ENCODE measurements at regions of chr4 and their contacts with region 1.

Region 1: DNA sequence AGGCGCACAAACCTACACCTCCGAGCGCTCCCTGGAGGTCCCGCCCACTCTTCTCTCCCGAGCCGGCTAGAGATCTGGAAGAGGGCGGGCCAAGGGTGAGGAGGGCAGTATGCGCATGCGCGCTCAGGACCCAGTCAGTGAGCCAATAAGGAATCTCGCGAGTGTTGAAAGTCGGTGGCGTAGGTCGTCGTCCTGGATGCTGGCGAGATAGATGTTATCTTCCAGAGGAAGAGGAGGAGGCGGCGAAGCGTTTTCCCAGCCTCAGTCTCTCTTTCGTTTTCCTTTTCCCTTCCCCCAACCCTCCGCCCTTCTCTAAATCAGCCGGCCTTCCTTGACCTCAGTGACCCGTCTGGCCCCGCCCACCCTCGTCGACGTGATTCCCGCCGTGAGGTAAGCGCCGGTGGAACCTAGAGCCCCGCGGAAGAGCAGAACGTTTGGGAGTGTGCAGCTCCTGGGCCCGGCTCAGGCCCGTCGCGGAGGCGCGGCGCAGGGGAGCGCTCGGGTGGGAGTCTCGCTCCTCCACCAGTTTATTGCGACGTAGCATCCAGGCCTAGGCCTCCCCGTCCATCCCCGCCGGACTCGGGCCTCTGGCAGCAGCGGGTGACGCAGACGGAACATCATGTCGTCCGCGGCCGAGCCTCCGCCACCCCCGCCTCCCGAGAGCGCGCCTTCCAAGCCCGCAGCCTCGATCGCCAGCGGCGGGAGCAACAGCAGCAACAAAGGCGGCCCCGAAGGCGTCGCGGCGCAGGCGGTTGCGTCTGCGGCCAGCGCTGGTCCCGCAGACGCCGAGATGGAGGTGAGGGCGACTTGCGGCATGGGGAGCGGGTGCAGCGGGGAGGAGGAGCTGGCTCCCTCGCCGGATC is at the start of gene SMARCA5:
- DNase-seq: peak; percentile 98
- H3K4me3 Mint-ChIP-seq: peak within 1 kb of the TSS; percentile 100
- H3K27ac Mint-ChIP-seq: peak within 1 kb of the TSS; percentile 97
- H3K4me1 Mint-ChIP-seq: peaks cover 25% of the 10 kb centered on the region
- H3K27me3 Mint-ChIP-seq: peaks cover 14% of the 10 kb centered on the region
- total RNA-seq, gene SMARCA5: 59.0 and 60.6 TPM in 2 replicates

Region 2: DNA sequence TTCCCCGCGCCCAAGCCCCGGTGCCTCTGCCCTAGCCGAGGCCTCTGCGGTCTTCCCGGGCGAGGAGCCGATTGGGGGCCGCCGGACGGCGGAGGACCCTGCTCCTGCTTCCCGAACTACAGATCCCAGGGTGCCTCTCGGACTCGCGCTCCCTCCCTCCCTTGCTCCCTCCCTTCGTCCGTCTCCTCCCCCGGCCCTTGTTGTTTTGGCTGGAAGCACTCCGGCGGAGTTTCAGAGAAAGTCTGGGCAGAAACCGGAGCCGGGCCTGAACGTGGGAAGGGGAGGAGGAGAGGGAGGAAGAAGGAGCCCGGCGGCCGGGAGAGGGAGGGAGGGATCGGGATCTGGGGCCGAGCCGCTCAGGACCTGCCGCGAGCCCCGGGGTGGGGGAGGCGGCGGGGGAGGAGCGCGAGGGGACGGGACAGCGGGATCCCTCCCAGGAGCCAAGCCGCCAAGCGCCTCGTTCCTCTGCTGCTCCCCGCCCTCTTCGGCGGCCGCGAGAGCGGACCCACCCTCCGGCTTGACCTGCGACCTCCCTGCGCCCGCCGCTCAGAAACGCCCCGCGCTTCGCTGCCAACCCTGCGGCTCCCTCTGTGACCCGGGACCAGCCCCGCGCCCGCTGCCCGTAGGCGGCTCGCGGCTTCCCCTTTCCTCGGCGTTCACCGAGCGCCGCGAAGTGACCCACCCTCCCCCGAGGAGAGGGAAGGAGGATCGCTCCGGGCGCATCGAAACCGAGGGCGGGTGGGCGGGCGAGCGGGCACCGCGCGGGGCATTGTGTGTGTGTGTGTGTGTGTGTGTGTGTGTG is 177.4 kb before region 1 on chr4:
- intact Hi-C with region 1: loop called (anchors 2 kb)
- DNase-seq: peak; percentile 76
- H3K4me3 Mint-ChIP-seq: peak overlapping the region; percentile 86
- H3K27ac Mint-ChIP-seq: no peak overlapping the region
- H3K4me1 Mint-ChIP-seq: peaks cover 6% of the 10 kb centered on the region
- H3K27me3 Mint-ChIP-seq: peaks cover 53% of the 10 kb centered on the region

Region 3: DNA sequence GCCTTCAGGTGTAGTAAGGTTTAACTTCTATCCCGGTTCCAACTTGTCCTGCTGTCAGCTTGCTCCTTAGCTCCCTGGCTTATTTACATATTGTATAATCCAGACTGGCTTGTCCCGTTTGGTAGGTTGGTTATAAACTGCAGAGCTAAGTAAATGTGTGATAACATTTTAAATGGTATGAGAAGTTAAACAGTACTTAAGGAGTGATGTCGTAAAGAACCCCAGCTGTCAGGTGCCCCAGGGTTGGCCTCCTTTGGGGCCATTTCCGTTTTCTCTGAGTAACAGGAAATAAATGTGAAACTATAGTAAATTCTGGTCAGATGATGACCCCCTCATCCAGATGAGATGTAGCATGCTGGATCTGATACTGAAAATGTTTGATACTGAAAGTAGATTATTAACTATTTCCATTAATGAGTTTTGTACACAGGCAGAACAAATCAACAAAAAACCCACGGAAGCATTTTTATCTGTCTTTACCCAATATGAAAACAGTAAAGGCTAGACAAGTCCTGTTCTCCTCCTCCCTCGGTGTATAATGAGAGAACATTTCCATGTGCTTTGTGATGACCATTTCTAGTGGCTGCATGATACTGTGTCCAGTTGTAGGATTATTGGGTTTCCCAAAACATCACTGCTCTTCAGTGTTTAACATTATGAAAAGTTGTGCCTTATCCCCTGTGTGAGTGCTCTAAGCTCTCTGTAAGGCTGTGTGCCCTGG is 154.5 kb before region 1 on chr4:
- intact Hi-C with region 1: loop called (anchors 1 kb)
- DNase-seq: peak; percentile 74
- H3K4me3 Mint-ChIP-seq: peak overlapping the region; percentile 67
- H3K27ac Mint-ChIP-seq: peak overlapping the region; percentile 91
- H3K4me1 Mint-ChIP-seq: peaks cover 20% of the 10 kb centered on the region
- H3K27me3 Mint-ChIP-seq: peaks cover 9% of the 10 kb centered on the region

Region 4: GRCh38 chr4:143558823-143559756 is 45.6 kb after region 1 on chr4:
- intact Hi-C with region 1: loop called (anchors 2 kb)
- DNase-seq: peak; percentile 90
- H3K4me3 Mint-ChIP-seq: peak overlapping the region; percentile 94
- H3K27ac Mint-ChIP-seq: peak overlapping the region; percentile 92
- H3K4me1 Mint-ChIP-seq: peaks cover 18% of the 10 kb centered on the region
- H3K27me3 Mint-ChIP-seq: no peaks in the 10 kb centered on the region

Region 5: DNA sequence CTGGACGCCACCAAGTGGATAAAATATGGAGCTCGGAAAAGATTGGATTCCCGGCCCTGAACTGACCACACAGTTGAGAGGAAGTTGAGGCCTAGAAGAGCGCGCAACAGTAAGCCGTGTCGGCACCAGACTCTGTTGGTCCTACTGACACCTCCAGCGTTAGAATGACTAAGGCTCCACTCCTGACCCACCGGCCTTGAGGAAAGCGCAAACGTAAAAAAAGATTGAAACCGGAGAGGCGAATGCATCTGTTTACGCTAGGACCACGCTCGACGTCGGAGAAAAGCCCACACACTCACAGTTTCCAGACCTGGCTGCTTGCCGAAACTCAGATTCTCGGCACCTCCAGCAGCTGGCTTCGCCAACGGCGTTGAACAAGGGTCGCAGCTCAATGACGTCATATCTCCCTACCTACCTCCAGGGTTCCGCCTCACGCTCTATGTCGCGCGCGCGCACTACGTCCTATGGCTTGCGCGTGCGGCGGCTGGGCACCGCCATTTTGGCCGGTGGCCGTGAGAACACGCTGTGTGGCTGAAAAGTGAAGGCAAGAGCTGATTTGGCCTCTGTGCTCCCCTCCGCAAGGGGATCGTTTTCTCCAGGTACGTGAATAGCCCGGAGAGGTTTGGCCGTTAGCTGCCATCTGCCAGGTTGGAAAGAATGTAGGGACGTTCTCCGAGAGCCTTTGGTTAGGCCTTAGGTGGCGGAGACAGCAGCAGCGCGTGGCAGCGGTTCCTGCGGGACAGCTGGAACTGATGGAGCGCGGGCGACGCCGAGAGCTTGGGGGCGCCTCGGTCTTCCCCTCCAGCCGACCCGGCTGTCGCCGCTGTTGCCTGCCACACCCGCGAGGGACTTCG is 1584.5 kb after region 1 on chr4 and contains the starts of genes ABCE1 and ANAPC10:
- intact Hi-C with region 1: loop called (anchors 1 kb)
- DNase-seq: peak; percentile 99
- H3K4me3 Mint-ChIP-seq: peak within 1 kb of the TSS; percentile 96
- H3K27ac Mint-ChIP-seq: peak within 1 kb of the TSS; percentile 99
- H3K4me1 Mint-ChIP-seq: peaks cover 24% of the 10 kb centered on the region
- H3K27me3 Mint-ChIP-seq: no peaks in the 10 kb centered on the region
- total RNA-seq, gene ABCE1: 191 and 194 TPM in 2 replicates
- total RNA-seq, gene ANAPC10: 26.7 and 30.4 TPM in 2 replicates

Measured in activated CD4-positive, alpha-beta T cell treated with anti-CD3 and anti-CD28 coated beads, Interleukin-2, amount 10 ng/mL, durations not matched to agents 24 days and 14 days (primary cell).